BJ (cell line): ENCODE measurements at regions of chr1 and their contacts with region 1.

Region 1: GRCh38 chr1:52668711-52669110 is 29.4 kb downstream of the COA7 start:
- DNase-seq: no peak
- H3K4me3 ChIP-seq: no peak overlapping the region
- H3K27me3 ChIP-seq: no peaks in the 10 kb centered on the region
- CTCF ChIP-seq: no peak

Region 2: DNA sequence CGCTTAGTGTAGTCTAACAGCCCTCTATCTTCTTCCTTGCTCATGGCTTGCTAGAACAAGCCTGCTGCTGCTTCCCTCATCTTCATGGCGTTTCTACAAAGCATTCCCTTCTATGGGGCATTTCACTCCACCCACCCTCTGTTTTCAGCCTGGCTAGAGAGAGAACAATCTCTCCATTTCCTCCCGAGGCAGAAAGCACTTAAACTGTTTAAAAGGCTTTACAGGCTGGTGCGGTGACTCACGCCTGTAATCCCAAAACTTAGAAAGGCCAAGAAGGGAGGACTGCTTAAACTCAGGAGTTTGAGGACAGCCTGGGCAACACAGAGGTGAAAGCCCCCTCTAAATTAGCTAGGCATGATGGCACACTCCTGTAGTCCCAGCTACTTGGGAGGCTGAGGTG is 282.3 kb before region 1 on chr1:
- CTCF ChIA-PET with region 1: no interaction called
- POLR2A ChIA-PET with region 1: no interaction called
- DNase-seq: no peak
- H3K4me3 ChIP-seq: no peak overlapping the region
- H3K27me3 ChIP-seq: no peaks in the 10 kb centered on the region
- CTCF ChIP-seq: no peak

Region 3: DNA sequence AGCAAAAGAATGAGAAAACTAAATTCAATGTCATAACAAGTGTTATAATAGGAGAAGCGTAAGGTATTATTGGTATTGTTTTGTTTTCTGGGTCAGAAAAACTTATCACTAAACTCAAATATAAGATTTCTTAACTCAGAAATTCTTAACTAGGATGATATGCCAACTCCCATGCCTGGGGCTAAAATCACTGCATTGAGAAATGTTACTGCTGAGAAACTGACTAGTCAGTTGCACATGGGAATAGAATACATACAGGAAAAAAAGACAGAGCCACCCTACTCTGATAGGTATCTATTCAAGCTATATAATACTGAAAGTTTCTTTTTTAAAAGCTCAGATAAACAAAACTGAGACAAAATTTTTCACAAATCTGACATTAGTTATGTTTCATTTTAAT is 208.0 kb before region 1 on chr1:
- CTCF ChIA-PET with region 1: no interaction called
- POLR2A ChIA-PET with region 1: interaction called, 11 read pairs
- DNase-seq: peak; percentile 9
- H3K4me3 ChIP-seq: no peak overlapping the region
- H3K27me3 ChIP-seq: no peaks in the 10 kb centered on the region
- CTCF ChIP-seq: no peak

Region 4: GRCh38 chr1:52590275-52590674 is 78.4 kb before region 1 on chr1:
- CTCF ChIA-PET with region 1: no interaction called
- POLR2A ChIA-PET with region 1: no interaction called
- DNase-seq: no peak
- H3K4me3 ChIP-seq: no peak overlapping the region
- H3K27me3 ChIP-seq: peaks cover 6% of the 10 kb centered on the region
- CTCF ChIP-seq: no peak